K562 (cell line): ENCODE measurements at regions of chr5 and their contacts with region 1.

Region 1: DNA sequence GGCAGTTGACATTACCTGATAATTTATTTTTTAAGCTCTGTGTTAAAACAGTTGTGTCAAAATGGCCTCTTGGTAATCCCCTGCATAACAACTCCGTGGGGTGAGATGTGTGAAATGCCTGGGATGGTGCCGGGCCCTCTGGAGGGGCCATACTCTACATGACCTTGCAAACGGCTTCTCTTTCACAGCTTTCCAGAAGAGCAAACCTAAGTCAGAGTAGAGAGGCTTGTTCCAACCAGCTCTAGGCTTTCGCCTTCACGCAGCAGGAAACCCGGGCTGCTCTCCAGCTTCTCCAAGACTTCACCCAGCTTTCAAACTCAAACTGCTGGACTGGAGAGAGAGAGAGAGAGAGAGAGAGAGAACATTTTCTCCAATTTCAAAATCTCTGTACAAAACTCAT is 120.1 kb downstream of the SNX18 start:
- DNase-seq: no peak
- ATAC-seq: no peak
- H3K4me3 ChIP-seq: no peak overlapping the region
- H3K27ac ChIP-seq: no peak overlapping the region
- H3K4me1 ChIP-seq: no peaks in the 10 kb centered on the region
- H3K27me3 ChIP-seq: peaks cover 16 to 17% of the 10 kb centered on the region in 2 experiments
- CTCF ChIP-seq: no peak
- EP300 ChIP-seq: no peak
- POLR2A ChIP-seq: no peak
- RAD21 ChIP-seq: no peak

Region 2: DNA sequence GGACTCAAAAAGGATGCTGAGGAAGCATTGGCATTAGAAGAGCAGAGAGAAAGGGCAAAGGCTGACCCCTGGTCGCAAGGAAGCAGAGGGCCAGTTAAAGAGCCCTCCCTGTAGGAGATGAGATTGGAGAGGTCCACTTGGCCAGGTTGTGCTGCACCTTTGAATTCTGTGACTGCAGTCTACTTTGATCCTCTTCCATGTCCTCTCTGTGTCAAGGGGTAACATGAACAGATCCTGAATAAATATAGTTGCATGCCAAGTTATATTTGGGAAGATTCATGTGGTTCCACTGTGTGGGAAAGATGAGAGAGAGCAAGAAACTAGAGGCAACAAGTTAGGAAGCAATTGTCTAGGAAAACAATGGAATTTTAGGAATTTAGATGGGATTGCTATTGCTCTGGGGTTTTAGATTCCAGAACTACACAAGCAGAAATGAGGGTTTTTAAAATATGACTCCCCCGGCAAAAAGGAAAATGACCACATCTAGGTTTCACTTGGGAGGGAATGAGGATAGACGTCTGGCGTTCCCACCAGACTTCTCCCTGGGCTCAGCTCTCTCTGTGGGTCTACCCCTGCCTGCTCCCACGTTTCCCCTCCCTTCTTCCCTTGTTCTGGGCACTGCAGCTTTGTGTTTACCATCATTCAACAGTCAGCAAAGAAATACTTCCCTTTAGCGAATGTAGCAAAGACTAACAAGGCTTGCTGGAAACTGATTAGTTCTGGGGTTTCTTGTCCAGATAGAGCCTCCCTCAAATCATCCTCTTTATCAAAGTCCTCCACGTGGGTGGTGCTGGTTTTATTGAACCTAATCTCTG is 56.5 kb before region 1 on chr5:
- CTCF ChIA-PET with region 1: no interaction called
- POLR2A ChIA-PET with region 1: no interaction called
- in situ Hi-C with region 1: no loop called
- intact Hi-C with region 1: no loop called
- DNase-seq: no peak
- ATAC-seq: no peak
- H3K4me3 ChIP-seq: no peak overlapping the region
- H3K27ac ChIP-seq: no peak overlapping the region
- H3K4me1 ChIP-seq: no peaks in the 10 kb centered on the region
- H3K27me3 ChIP-seq: peaks cover 0 to 15% of the 10 kb centered on the region in 2 experiments; a peak in 2 of 5 replicates
- CTCF ChIP-seq: no peak
- EP300 ChIP-seq: no peak
- POLR2A ChIP-seq: no peak
- RAD21 ChIP-seq: no peak

Region 3: DNA sequence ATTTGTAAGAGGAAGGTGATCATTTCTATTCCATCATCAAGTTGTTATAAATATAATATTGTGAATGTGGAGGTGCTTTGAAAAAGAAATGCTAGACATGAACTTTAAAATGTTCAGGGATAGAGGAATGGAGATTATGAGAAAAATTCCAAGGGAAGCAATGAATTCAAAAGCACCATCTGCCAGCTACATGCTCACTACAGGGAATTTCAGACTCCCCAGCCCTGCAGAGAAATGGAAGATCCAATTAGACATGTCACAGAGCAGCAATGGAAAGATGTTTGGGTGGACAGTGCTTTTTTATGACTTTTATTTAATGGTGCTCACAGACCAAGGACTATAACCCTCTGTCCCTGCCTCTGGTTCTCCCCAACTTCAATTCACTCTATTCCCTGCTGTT is 138.0 kb after region 1 on chr5:
- CTCF ChIA-PET with region 1: no interaction called
- POLR2A ChIA-PET with region 1: no interaction called
- in situ Hi-C with region 1: no loop called
- intact Hi-C with region 1: no loop called
- DNase-seq: no peak
- ATAC-seq: no peak
- H3K4me3 ChIP-seq: no peak overlapping the region
- H3K27ac ChIP-seq: no peak overlapping the region
- H3K4me1 ChIP-seq: no peaks in the 10 kb centered on the region; a peak in 2 of 5 replicates
- H3K27me3 ChIP-seq: peaks cover 7 to 9% of the 10 kb centered on the region in 2 experiments; a peak in 3 of 5 replicates
- CTCF ChIP-seq: no peak
- EP300 ChIP-seq: no peak
- POLR2A ChIP-seq: no peak
- RAD21 ChIP-seq: no peak

Region 4: GRCh38 chr5:54844905-54845566 is 207.4 kb after region 1 on chr5:
- CTCF ChIA-PET with region 1: no interaction called
- POLR2A ChIA-PET with region 1: no interaction called
- in situ Hi-C with region 1: no loop called
- intact Hi-C with region 1: loop called (anchors 10 kb)
- DNase-seq: peak in 2 of 4 experiments; percentile 11 to 53
- ATAC-seq: peak; percentile 61; the same call in 1 of the 3 replicates
- H3K4me3 ChIP-seq: no peak overlapping the region
- H3K27ac ChIP-seq: no peak overlapping the region
- H3K4me1 ChIP-seq: no peaks in the 10 kb centered on the region; a peak in 1 of 5 replicates
- H3K27me3 ChIP-seq: peaks cover 0 to 7% of the 10 kb centered on the region in 2 experiments; a peak in 1 of 5 replicates
- CTCF ChIP-seq: peak; percentile 32 to 74 (median 46); a peak in 4 of 6 replicates
- EP300 ChIP-seq: no peak
- POLR2A ChIP-seq: no peak
- RAD21 ChIP-seq: peak; percentile 84 to 91

Region 5: GRCh38 chr5:54959673-54960418 is 322.2 kb after region 1 on chr5:
- CTCF ChIA-PET with region 1: no interaction called
- POLR2A ChIA-PET with region 1: no interaction called
- in situ Hi-C with region 1: no loop called
- intact Hi-C with region 1: no loop called
- DNase-seq: peak; percentile 18 to 42 (median 25)
- ATAC-seq: peak; percentile 66; the same call in 2 of the 3 replicates
- H3K4me3 ChIP-seq: no peak overlapping the region
- H3K27ac ChIP-seq: no peak overlapping the region
- H3K4me1 ChIP-seq: no peaks in the 10 kb centered on the region
- H3K27me3 ChIP-seq: peaks cover 0 to 6% of the 10 kb centered on the region in 2 experiments; a peak in 1 of 5 replicates
- CTCF ChIP-seq: peak; percentile 44 to 66 (median 61)
- EP300 ChIP-seq: no peak
- POLR2A ChIP-seq: no peak
- RAD21 ChIP-seq: peak in 1 of 2 experiments; percentile 40; a peak in 1 of 4 replicates